ENCODE measurements at regions of chr5 and their contacts with region 1.

Region 1: DNA sequence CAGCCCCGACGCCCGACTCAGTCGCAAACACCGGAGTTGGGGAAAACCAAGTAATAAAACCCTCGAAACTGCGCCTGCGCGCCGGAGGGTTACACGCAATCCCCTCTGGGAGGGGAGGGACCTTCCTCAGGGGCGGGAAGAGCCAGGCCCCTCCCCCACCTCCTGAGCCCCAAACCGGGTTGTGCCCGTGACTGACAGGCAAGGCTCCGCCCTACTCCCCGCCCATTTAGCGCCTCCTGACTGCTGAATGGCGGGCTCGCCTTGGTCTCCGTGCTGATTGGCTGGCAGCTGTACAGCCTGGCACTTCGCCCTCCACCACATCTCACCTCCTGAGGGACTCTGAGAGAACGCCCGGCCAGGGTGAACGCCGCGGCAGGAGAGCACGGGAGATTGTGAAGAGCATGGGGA is at the start of gene PRDM9:
- DNase-seq: peak in 1 of 2 experiments; percentile 11
- H3K4me3 ChIP-seq: no peak within 1 kb of the TSS
- H3K27ac ChIP-seq: no peak within 1 kb of the TSS
- H3K4me1 ChIP-seq: no peaks in the 10 kb centered on the region
- H3K27me3 ChIP-seq: no peaks in the 10 kb centered on the region
- CTCF ChIP-seq: no peak
- total RNA-seq, gene PRDM9: not detected in 2 replicates

Region 2: DNA sequence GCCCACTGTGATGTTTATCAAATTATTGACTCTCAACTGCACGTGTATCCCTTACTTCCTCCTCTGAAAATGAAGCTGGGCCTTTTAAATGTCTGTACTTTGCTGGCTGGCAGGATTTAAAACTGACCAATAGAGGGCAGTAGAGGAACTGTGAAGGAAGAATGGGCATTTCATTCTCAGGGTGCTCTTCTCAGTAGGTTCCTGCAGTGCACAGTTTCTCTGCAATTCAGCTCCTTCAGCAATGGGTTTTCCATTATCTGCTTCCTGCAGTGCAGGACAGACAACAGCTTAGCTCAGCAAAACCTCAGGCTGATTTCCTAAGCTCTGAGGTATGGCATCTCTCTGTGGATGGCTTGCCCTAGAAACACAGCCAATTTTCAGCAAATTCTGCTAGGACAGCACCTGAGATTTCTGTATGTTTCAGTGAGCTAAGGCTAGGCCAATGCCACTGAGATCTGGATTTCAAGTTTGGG is 298.3 kb before region 1 on chr5:
- CTCF ChIA-PET with region 1: no interaction called
- POLR2A ChIA-PET with region 1: no interaction called
- intact Hi-C with region 1: loop called (anchors 10 kb)
- DNase-seq: peak; percentile 31 to 63
- H3K4me3 ChIP-seq: no peak overlapping the region
- H3K27ac ChIP-seq: no peak overlapping the region
- H3K4me1 ChIP-seq: no peaks in the 10 kb centered on the region
- H3K27me3 ChIP-seq: no peaks in the 10 kb centered on the region
- CTCF ChIP-seq: peak; percentile 79